ENCODE measurements at regions of chr14 and their contacts with region 1.

Region 1: GRCh38 chr14:90399541-90400444 is 3.0 kb downstream of the CALM1 start:
- DNase-seq: peak; percentile 94

Region 2: DNA sequence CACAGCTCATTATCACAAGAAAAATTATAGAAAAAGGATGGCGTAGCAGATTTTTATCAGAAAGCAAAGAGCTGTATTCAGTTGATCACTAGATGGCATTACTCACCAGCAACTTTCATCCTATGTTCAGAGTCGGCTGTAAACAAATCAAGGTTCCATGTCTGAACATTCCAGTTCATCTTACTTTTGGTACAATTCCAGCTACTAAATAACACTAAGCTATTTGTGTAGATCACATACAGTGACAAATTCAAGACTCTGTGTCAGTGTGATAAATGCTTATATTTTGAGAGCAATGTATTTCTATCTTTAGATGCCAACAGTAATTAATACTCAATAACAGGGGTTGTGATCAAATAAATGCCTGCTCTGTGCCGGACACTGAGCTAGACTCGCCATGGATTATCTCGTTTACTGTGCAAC is 98.1 kb before region 1 on chr14:
- intact Hi-C with region 1: loop called (anchors 5 kb)
- DNase-seq: no peak

Region 3: GRCh38 chr14:90383075-90383730 is 16.6 kb before region 1 on chr14:
- intact Hi-C with region 1: loop called (anchors 1 kb)
- DNase-seq: peak; percentile 100

Region 4: DNA sequence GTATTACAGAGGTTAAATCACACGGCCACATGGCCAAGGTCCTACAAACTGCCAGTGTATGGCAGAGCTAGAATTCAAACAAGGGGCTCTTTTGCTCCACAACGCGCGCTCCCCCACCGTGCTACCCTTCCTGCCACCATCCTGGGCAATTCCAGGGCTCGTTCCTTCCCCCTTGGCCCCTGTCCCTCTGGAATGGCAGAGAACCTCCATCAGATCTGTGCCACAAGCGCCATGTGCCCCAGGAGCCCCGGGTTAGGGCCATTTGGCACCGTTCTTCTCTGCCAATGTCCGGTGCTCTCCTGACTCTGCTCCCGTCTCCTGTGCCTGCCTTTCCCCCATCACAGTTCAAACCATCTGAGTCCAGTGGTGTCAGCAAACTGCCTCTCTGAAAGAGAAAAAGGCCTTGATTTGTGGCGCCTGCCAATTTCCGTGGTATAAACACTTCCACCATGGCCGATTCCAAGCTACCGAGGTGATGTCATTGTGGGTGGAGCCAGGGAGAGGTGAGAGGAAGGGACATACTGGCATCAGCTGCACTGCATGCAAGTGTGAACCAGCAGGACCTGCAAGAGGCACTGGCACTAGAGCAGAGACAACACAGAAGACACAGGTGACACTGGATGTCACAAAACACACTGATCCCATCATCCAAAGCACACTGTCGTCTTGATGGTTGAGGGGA is 160.2 kb after region 1 on chr14:
- intact Hi-C with region 1: no loop called
- DNase-seq: no peak

Region 5: GRCh38 chr14:90697577-90698206 is 297.9 kb after region 1 on chr14:
- intact Hi-C with region 1: loop called (anchors 1 kb)
- DNase-seq: peak; percentile 93

Region 6: GRCh38 chr14:90795746-90796145 is 396.0 kb after region 1 on chr14:
- intact Hi-C with region 1: no loop called
- DNase-seq: no peak

Region 7: DNA sequence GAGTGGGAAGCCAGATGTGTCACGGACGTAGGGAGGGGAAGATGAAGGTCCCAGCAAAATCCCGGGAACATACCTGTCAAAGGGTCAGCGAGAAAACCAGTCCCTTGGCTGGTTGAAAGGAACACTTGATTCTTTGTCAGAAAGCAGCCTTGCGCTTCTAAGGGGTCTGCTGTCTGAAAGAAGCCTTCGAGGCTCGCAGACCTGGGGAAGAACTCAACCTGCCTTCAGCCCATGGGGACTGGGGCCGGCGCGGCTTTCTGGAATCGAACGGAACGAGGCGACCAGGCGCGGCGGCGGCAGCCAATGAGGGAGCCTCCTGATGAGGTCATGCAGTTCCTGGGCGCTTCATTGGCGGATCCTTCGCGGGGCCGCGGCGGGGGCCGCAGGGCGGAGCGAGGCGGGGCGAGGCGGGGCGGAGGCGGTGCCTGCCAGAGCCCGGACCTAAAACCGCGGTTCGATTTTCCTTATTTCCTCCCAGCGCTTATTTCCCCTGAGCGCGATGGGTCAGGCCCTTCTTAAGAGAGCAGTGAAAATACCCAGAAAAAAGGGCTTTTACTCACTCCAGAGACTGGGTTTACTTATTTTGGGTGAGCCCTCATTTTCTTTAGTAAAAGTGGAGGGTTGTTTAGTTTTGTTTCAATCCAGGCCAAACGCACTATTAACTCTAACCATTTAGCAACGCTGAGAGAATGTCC is 428.3 kb after region 1 on chr14:
- intact Hi-C with region 1: loop called (anchors 10 kb)
- DNase-seq: peak; percentile 98